Left colon (tissue), 2 donors: ENCODE measurements at regions of chr1 and their contacts with region 1.

Region 1: DNA sequence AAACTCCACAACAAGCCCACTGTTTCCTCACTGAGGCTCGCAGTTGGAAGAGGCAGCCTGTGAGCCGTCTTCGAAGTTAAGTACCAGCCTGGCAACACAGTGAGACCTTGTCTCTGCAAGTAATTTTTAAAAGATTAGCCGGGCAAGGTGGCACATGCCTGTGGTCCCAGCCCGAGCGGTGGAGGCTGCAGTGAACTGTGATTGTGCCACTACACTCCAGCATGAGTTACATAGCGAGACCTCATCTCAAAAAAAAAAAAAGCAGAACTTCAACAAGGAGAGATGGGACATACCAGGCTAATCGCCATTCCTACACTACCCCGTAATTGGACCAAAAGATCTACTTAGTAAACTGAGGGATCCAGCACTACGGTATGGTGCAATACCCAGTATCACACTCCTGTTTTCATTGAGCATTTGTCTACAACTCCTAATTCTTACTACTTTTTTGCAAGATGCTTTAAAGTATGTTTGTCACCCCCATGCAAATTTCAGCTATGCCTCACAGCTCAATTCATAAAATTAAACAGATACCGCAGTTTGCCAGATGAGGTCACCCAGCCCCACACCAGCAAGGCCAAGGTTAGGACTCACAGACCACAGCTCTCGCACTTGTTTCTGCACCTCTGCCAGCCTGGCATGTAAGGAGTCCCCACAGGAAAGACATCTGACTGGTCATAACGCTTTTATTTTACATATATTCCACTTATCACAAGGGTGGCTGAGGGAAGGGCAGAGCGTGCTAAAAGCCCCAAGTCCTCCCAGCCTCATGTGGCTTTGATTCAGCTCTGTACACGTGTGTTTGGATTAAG is 21.0 kb downstream of the SDE2 start:
- DNase-seq: no peak
- ATAC-seq: no peak

Region 2: DNA sequence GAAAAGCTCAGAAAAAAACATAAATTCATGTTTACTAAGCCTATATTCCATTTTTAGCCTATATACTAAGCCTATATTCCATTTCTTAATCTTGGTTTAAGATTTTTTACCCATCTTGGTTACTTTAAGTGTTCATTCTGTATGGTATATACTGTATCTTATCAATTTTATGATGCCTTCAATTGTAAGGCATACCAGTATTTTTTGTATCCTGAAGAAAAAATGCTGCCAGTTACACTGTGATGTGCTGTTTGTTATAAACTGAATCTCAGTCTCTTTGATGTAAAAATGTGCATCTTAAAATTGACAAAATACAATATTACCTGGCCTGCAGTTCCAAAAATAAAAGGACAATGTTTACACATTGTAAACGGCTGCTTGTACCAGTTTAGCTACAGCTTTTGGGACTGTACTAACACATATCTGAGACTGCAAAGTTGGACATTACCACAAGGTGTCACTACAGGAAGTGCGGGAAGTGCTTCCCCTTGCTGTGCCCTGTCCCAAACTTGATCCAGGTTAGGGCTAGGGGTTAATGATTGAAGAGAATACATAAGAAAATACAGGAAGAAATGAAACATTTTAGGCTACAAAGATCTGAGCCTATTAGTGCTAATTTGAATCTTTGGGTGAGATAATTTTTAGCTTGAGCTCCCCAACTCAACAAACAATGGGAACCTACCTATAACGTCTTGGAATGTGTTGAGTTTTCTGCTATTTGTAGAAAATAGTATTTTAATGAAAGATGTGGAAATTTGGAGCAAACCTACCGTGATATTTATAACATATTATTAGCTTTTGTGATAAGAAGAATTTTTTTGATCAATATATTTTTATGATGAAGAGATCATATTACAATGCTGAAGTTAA is 659.2 kb before region 1 on chr1:
- intact Hi-C with region 1: loop called in 1 of 2 experiments (anchors 10 kb)
- DNase-seq: no peak
- ATAC-seq: peak; percentile 90

Region 3: GRCh38 chr1:226092965-226093364 is 114.8 kb after region 1 on chr1:
- intact Hi-C with region 1: no loop called
- DNase-seq: no peak
- ATAC-seq: no peak